Endothelial cell of umbilical vein (primary cell): ENCODE measurements at regions of chr11 and their contacts with region 1.

Region 1: GRCh38 chr11:111932611-111932950 is 4.6 kb upstream of the DIXDC1 start:
- DNase-seq: no peak
- H3K4me3 ChIP-seq: no peak overlapping the region
- H3K27ac ChIP-seq: no peak overlapping the region
- H3K4me1 ChIP-seq: peaks cover 11% of the 10 kb centered on the region
- H3K27me3 ChIP-seq: no peaks in the 10 kb centered on the region
- CTCF ChIP-seq: no peak
- POLR2A ChIP-seq: no peak

Region 2: DNA sequence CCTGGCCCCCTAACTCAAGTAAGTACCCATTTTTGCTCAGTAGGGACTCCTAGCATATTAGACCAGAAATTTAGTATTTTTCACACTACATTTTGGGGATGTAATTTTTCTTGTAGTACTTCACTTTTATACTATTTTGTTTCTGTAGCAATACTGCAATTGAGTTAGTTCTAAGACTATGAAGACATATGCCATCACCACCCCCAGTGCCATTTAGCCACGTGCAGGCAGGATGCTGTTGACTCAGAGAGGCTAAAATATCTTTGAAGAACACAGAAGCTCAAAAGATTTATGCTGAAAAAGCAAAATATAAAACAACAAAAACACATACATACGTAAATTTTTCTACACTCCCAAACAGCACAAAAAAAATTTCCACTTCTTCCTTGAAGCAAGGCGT is 63.5 kb after region 1 on chr11:
- CTCF ChIA-PET with region 1: interaction called, 18 read pairs
- POLR2A ChIA-PET with region 1: no interaction called
- dilution Hi-C with region 1: no loop called
- intact Hi-C with region 1: loop called (anchors 1 kb)
- DNase-seq: no peak
- H3K4me3 ChIP-seq: no peak overlapping the region
- H3K27ac ChIP-seq: no peak overlapping the region
- H3K4me1 ChIP-seq: no peaks in the 10 kb centered on the region
- H3K27me3 ChIP-seq: no peaks in the 10 kb centered on the region
- CTCF ChIP-seq: no peak
- POLR2A ChIP-seq: no peak

Region 3: GRCh38 chr11:112074026-112074811 is 141.6 kb after region 1 on chr11 and contains the start of gene NKAPD1:
- CTCF ChIA-PET with region 1: no interaction called
- POLR2A ChIA-PET with region 1: no interaction called
- dilution Hi-C with region 1: no loop called
- intact Hi-C with region 1: loop called (anchors 2 kb)
- DNase-seq: peak; percentile 93
- H3K4me3 ChIP-seq: peak within 1 kb of the TSS; percentile 68 to 79 (median 71)
- H3K27ac ChIP-seq: peak within 1 kb of the TSS; percentile 69
- H3K4me1 ChIP-seq: peaks cover 10% of the 10 kb centered on the region
- H3K27me3 ChIP-seq: no peaks in the 10 kb centered on the region
- CTCF ChIP-seq: no peak
- POLR2A ChIP-seq: peak; percentile 45
- total RNA-seq, gene NKAPD1: 16.7 and 18.5 TPM in 2 replicates